ENCODE measurements at regions of chr4 and their contacts with region 1.

Region 1: GRCh38 chr4:6840062-6840976 is 57.8 kb downstream of the KIAA0232 start:
- DNase-seq: no peak
- H3K4me3 ChIP-seq: no peak overlapping the region
- H3K27ac ChIP-seq: peak overlapping the region; percentile 36 to 56 (median 42)
- H3K4me1 ChIP-seq: peaks cover 24 to 46% (median 40%) of the 10 kb centered on the region in 4 donors
- H3K27me3 ChIP-seq: no peaks in the 10 kb centered on the region
- CTCF ChIP-seq: no peak
- EP300 ChIP-seq: no peak
- POLR2A ChIP-seq: no peak

Region 2: DNA sequence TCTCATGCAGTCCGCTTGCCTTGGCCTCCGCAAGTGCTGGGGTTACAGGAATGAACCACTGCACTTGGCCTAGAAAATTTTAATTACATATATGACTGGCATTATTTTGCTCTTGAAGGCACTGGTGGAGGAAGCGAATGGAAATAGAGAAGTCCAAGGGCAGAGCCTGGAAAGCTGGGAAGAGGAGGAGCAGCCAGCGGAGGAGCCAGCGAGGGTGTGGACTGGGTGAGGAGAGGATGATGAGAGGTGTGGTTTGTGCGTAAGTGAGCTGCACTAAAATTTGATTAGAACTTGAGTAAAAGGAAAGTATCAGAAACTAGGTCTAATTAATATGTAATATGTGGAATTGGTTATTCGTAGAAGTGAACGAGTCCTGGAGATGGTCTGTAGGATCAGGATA is 44.5 kb before region 1 on chr4:
- intact Hi-C with region 1: loop called (anchors 5 kb)
- DNase-seq: no peak
- H3K4me3 ChIP-seq: no peak overlapping the region
- H3K27ac ChIP-seq: no peak overlapping the region
- H3K4me1 ChIP-seq: peaks cover 35 to 79% (median 60%) of the 10 kb centered on the region in 4 donors
- H3K27me3 ChIP-seq: no peaks in the 10 kb centered on the region
- CTCF ChIP-seq: no peak
- EP300 ChIP-seq: no peak
- POLR2A ChIP-seq: no peak

Region 3: GRCh38 chr4:6885951-6886557 is 45.7 kb after region 1 on chr4:
- intact Hi-C with region 1: no loop called
- DNase-seq: no peak
- H3K4me3 ChIP-seq: peak overlapping the region in 3 of 4 donors; percentile 0 to 26 (median 25)
- H3K27ac ChIP-seq: peak overlapping the region; percentile 69 to 85 (median 78)
- H3K4me1 ChIP-seq: peaks cover 22 to 29% (median 27%) of the 10 kb centered on the region in 4 donors
- H3K27me3 ChIP-seq: no peaks in the 10 kb centered on the region
- CTCF ChIP-seq: peak; percentile 27 to 39 (median 29)
- EP300 ChIP-seq: no peak
- POLR2A ChIP-seq: no peak

Measured in esophagus muscularis mucosa (tissue), 4 donors.